ENCODE measurements at regions of chr11 and their contacts with region 1.

Region 1: DNA sequence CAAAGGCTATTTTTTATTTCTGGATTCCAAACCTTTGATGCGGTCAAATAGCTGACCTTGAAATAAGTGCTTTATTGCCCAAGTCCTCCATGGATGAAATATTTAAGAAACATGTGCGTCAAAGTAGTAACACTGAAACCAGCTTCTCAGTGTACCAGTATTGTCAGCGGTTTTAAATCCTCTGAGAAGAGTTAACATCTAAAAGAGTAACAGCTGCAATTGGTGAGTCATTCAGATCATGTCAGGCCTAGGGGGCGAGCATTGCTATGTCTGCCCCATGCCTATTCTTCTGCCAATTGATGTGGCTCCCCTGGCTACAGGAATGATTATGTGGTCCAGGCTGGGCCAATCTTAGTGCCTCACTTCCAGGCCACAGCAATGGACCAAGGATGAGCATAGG is 263.3 kb upstream of the SORL1-AS1 start:
- DNase-seq: no peak
- H3K4me3 ChIP-seq: no peak overlapping the region
- H3K27ac ChIP-seq: no peak overlapping the region
- H3K27me3 ChIP-seq: no peaks in the 10 kb centered on the region
- CTCF ChIP-seq: no peak

Region 2: GRCh38 chr11:121655537-121656327 is 60.3 kb before region 1 on chr11:
- intact Hi-C with region 1: no loop called
- DNase-seq: peak; percentile 82 to 92 (median 90)
- H3K4me3 ChIP-seq: peak overlapping the region; percentile 39 to 80 (median 61)
- H3K27ac ChIP-seq: peak overlapping the region; percentile 85 to 99 (median 97)
- H3K27me3 ChIP-seq: no peaks in the 10 kb centered on the region
- CTCF ChIP-seq: peak; percentile 69 to 95 (median 82)

Region 3: DNA sequence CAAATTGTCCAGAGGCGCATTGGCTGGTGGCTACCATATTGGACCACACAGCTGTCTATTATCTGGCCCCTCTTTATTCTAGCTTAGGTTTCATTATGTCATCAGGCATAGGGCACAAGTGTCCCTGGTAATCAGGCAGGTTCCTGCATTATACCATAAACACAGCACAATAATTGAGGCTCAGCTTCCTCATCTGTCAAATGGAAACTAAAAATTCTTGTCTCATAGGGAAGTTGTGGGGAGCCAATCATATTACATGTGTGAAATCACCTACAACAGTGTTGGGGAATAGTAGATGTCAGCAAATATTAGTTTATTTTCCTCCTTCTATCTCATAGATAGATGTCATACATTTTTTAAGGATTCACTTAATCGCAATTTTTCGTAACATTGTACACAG is 32.3 kb before region 1 on chr11:
- intact Hi-C with region 1: loop called in 1 of 2 experiments (anchors 2 kb)
- DNase-seq: no peak
- H3K4me3 ChIP-seq: no peak overlapping the region
- H3K27ac ChIP-seq: no peak overlapping the region
- H3K27me3 ChIP-seq: no peaks in the 10 kb centered on the region
- CTCF ChIP-seq: no peak

Region 4: GRCh38 chr11:121703201-121703600 is 12.9 kb before region 1 on chr11:
- intact Hi-C with region 1: loop called in 1 of 2 experiments (anchors 2 kb)
- DNase-seq: no peak
- H3K4me3 ChIP-seq: no peak overlapping the region
- H3K27ac ChIP-seq: no peak overlapping the region
- H3K27me3 ChIP-seq: no peaks in the 10 kb centered on the region
- CTCF ChIP-seq: no peak

Measured in dorsolateral prefrontal cortex (tissue), 120 donors.